IMR-90 (cell line): ENCODE measurements at regions of chr17 and their contacts with region 1.

Region 1: GRCh38 chr17:4565209-4566141 is 5.1 kb upstream of the GGT6 start:
- DNase-seq: peak; percentile 75
- ATAC-seq: peak; percentile 90
- H3K4me3 ChIP-seq: no peak overlapping the region
- H3K27ac ChIP-seq: no peak overlapping the region
- H3K4me1 ChIP-seq: no peaks in the 10 kb centered on the region
- H3K27me3 ChIP-seq: peaks cover 13% of the 10 kb centered on the region
- CTCF ChIP-seq: peak; percentile 85
- POLR2A ChIP-seq: no peak
- RAD21 ChIP-seq: peak; percentile 62

Region 2: DNA sequence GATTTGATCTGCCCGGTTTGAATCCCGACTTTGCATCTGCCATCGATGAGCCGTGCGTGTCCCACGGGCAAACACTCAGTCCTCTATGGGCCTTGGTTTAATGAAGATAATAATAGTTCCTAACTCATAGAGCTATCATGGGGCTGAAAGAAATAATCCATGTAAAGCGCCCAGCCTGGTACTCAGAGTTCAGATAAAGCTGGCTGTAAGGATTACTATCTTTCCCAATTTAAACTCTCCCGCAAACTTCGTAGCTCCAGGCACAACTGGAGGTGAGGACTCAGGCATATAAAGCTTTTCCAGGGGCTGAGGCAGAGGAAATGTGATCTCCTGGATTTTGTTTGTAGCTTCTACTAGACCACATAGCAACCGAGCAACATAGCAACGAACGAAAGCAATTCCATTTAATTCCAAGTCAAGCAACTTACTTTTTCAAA is 59.7 kb after region 1 on chr17:
- CTCF ChIA-PET with region 1: interaction called, 26 read pairs
- POLR2A ChIA-PET with region 1: no interaction called
- dilution Hi-C with region 1: no loop called
- in situ Hi-C with region 1: loop called (anchors 5 kb)
- intact Hi-C with region 1: loop called (anchors 1 kb)
- DNase-seq: peak; percentile 13
- ATAC-seq: no peak
- H3K4me3 ChIP-seq: no peak overlapping the region
- H3K27ac ChIP-seq: no peak overlapping the region
- H3K4me1 ChIP-seq: no peaks in the 10 kb centered on the region; the same call in 1 of the 2 replicates
- H3K27me3 ChIP-seq: peaks cover 15% of the 10 kb centered on the region
- CTCF ChIP-seq: no peak
- POLR2A ChIP-seq: no peak
- RAD21 ChIP-seq: no peak

Region 3: GRCh38 chr17:4703330-4703691 is 137.8 kb after region 1 on chr17:
- CTCF ChIA-PET with region 1: no interaction called
- POLR2A ChIA-PET with region 1: no interaction called
- dilution Hi-C with region 1: no loop called
- in situ Hi-C with region 1: no loop called
- intact Hi-C with region 1: loop called (anchors 5 kb)
- DNase-seq: peak; percentile 5
- ATAC-seq: no peak
- H3K4me3 ChIP-seq: peak overlapping the region; percentile 94
- H3K27ac ChIP-seq: peak overlapping the region; percentile 61; the same call in 1 of the 2 replicates
- H3K4me1 ChIP-seq: peaks cover 6% of the 10 kb centered on the region; the same call in 1 of the 2 replicates
- H3K27me3 ChIP-seq: no peaks in the 10 kb centered on the region
- CTCF ChIP-seq: no peak
- POLR2A ChIP-seq: no peak
- RAD21 ChIP-seq: no peak